ENCODE measurements at regions of chr4 and their contacts with region 1.

Region 1: GRCh38 chr4:55546756-55547465 is at the start of gene CLOCK:
- DNase-seq: peak; percentile 86 to 93 (median 91)
- H3K4me3 ChIP-seq: peak within 1 kb of the TSS; percentile 78
- H3K27ac ChIP-seq: peak within 1 kb of the TSS; percentile 94 to 99
- H3K4me1 ChIP-seq: no peaks in the 10 kb centered on the region
- H3K27me3 ChIP-seq: no peaks in the 10 kb centered on the region
- CTCF ChIP-seq: peak; percentile 47 to 70 (median 70)
- EP300 ChIP-seq: no peak
- POLR2A ChIP-seq: peak; percentile 58
- total RNA-seq, gene CLOCK: 16.1 to 36.4 (median 34.6) TPM

Region 2: DNA sequence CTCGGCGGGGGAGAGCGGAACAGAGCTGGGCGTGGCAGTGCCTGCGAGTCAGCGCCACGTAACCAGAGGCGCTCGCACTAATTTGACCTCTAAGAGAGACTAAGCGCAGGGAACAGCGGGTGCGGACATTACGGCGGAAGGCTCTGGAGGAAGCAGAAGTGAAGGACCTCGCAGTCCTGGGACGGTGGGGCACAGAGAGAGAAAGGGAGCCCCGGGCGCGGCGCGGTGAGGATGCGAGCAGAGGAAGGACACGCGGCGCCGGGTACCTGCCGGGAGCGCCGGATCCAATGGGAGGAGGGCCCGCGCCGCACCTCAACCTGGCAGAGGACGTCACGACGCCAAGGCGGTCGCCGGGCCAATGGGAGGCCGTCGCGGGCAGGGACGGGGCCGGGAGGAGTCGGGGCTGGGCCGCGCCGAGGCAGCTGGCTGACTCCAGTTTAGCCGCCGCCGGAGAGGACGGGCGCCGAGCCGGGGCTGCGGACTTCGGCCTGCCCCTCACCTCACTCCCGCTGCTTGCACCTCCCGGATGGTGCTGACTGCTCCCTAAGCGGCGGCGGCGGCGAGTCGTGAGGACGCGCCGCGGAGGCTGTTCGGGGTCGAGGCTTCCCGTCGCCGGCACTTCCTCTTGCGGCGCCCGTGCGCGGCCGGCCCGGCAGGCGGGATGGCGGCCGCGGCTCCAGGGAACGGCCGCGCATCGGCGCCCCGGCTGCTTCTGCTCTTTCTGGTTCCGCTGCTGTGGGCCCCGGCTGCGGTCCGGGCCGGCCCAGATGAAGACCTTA is 151.2 kb before region 1 on chr4 and contains the start of gene TMEM165:
- intact Hi-C with region 1: loop called in 2 of 4 experiments (anchors 2 kb)
- DNase-seq: peak; percentile 88 to 91 (median 89)
- H3K4me3 ChIP-seq: peak within 1 kb of the TSS; percentile 85
- H3K27ac ChIP-seq: peak within 1 kb of the TSS; percentile 92 to 95
- H3K4me1 ChIP-seq: peaks cover 5% of the 10 kb centered on the region
- H3K27me3 ChIP-seq: no peaks in the 10 kb centered on the region
- CTCF ChIP-seq: peak in 1 of 3 donors; percentile 11
- EP300 ChIP-seq: peak; percentile 32
- POLR2A ChIP-seq: peak; percentile 90
- total RNA-seq, gene TMEM165: 54.6 to 230 (median 84.1) TPM

Measured in ovary (tissue), 10 donors.